ENCODE measurements at regions of chr11 and their contacts with region 1.

Region 1: DNA sequence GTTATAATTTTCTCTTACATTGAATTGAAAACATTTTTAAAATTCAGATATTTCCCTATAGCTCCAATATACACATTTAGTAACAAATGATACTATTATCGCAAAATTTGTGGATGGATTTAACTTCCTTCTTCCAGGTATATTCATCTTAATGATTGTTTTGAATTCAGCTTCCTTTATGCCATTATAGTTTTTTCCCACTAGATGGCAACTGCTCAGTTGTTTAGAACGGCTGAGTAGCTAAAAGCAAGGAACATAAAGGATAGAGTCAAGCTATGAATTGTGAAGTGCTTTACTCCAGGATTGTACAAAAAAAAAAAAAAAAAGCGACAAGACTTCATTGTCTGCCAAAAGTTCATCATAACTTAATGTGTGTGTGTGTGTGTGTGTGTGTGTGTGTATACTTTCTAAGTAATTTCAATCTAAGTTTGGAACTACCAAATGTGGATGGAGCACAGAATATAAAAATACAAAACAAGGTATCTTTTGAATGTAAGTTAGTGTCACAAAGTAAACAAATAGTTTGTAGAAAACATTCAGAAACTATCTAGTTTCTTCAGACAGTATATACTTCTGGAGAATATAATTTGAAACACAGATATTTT is 846.4 kb downstream of the DLG2 start:
- DNase-seq: peak; percentile 14
- H3K4me3 ChIP-seq: no peak overlapping the region
- H3K27ac ChIP-seq: no peak overlapping the region
- H3K4me1 ChIP-seq: no peaks in the 10 kb centered on the region
- H3K27me3 ChIP-seq: no peaks in the 10 kb centered on the region
- CTCF ChIP-seq: peak; percentile 42 to 65

Region 2: DNA sequence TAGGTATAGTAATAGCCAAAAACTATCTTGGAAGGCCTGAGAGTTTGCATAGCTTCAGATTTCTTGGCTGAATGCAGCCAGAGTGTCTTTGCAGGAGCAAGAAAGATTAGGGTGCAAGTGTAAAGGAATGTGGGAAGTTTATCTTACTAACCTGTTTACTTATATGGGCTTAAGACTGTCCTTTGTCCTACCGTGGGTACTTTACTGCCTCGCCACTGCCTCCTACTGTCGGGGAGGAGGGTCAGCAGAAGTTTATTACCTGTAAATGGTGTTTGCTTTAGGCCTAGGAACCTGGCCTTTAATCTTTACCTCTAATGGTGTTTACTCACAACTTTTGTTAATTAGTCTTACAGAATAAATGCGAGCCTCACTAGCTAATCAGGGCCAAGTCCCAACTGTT is 212.6 kb after region 1 on chr11:
- CTCF ChIA-PET with region 1: no interaction called
- dilution Hi-C with region 1: no loop called
- in situ Hi-C with region 1: no loop called
- intact Hi-C with region 1: loop called (anchors 5 kb)
- DNase-seq: peak; percentile 4
- H3K4me3 ChIP-seq: no peak overlapping the region
- H3K27ac ChIP-seq: no peak overlapping the region
- H3K4me1 ChIP-seq: no peaks in the 10 kb centered on the region
- H3K27me3 ChIP-seq: no peaks in the 10 kb centered on the region
- CTCF ChIP-seq: peak; percentile 40 to 51

Region 3: DNA sequence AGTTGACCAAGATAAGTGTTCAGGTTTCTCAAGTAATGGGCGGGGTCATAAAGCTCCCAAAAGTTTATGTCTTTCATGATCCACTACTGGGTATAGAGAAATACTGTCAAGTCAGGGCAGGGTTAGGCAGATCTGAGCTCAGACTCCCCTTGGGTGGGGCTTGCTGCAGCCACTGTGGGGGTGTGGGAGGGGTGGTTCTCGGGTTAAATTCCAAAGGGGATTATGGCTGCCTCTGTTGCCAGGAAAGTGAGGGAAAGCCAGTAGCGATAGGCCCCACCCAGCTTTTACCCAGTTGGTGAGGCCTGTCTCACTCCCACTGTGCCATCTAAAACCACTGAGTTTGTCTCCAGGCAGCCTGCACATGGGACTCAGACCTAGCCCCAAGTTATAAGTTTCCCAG is 808.6 kb after region 1 on chr11:
- CTCF ChIA-PET with region 1: interaction called, 3 read pairs
- dilution Hi-C with region 1: no loop called
- in situ Hi-C with region 1: loop called (anchors 10 to 25 kb)
- intact Hi-C with region 1: loop called (anchors 1 kb)
- DNase-seq: no peak
- H3K4me3 ChIP-seq: no peak overlapping the region
- H3K27ac ChIP-seq: no peak overlapping the region
- H3K4me1 ChIP-seq: no peaks in the 10 kb centered on the region
- H3K27me3 ChIP-seq: no peaks in the 10 kb centered on the region
- CTCF ChIP-seq: no peak